Psoas muscle (tissue), 8 donors: ENCODE measurements at regions of chr5 and their contacts with region 1.

Region 1: DNA sequence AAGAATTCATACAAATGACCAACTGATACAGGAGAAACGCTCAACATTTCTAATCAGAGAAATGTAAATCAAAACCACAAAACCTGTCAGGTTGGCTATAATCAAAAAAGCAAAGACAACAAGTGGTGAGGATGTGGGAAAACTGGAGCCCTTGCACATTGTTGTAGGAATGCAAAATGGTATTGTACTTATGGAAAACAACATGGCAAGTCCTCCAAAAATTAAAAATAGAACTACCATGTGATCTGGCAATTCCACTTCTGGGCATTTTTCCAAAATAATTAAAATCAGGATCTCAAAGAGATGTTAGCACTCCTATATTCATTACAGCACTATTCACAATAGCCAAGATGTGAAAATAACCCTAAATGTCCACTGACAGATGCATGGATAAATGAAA is 76.1 kb downstream of the FNIP1 start:
- DNase-seq: no peak
- ATAC-seq: peak in 1 of 4 donors; percentile 24
- H3K4me3 ChIP-seq: no peak overlapping the region
- H3K27ac ChIP-seq: no peak overlapping the region
- H3K4me1 ChIP-seq: no peaks in the 10 kb centered on the region
- H3K27me3 ChIP-seq: no peaks in the 10 kb centered on the region
- CTCF ChIP-seq: no peak

Region 2: DNA sequence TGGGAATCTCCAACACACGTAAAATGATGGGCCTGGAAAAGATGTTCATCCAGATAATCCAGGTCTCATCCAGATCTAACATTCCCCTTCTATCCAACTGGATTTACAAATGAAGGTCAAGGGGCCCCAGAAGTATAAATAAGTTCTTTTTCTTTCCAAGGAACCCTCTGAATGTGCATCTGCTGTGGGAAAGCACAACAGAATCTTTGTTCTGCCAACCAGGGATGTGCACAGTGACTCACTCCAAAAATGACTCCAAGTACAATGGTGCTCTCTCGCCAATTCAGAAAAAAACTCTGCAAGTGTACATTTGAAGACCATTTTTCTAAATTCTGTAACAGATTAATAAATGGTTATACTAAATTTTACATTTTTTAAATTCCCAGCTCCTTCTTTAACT is 98.1 kb before region 1 on chr5:
- intact Hi-C with region 1: no loop called
- DNase-seq: no peak
- ATAC-seq: peak in 2 of 4 donors; percentile 49 to 72
- H3K4me3 ChIP-seq: no peak overlapping the region
- H3K27ac ChIP-seq: no peak overlapping the region
- H3K4me1 ChIP-seq: peaks cover 27% of the 10 kb centered on the region
- H3K27me3 ChIP-seq: no peaks in the 10 kb centered on the region
- CTCF ChIP-seq: no peak

Region 3: DNA sequence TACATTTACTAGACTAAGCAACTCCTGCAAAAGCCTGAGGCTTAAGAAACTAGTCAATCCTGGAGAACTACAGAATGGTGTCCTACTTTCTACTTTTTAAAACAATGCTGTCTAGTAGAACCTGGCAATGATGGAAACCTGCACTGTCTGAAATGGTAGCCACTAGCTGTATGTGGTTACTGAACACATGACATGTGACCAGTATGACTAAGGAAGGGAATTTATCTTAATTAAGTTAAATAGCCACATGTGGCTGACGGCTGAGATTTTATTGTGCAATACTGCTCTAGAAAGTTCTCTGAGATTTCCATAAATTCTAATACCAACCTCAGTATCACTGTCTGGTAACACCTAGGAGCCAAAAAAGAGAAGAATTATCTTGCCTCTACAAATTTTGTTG is 40.8 kb before region 1 on chr5:
- intact Hi-C with region 1: no loop called
- DNase-seq: no peak
- ATAC-seq: no peak
- H3K4me3 ChIP-seq: no peak overlapping the region
- H3K27ac ChIP-seq: no peak overlapping the region
- H3K4me1 ChIP-seq: peaks cover 9% of the 10 kb centered on the region
- H3K27me3 ChIP-seq: no peaks in the 10 kb centered on the region
- CTCF ChIP-seq: no peak

Region 4: DNA sequence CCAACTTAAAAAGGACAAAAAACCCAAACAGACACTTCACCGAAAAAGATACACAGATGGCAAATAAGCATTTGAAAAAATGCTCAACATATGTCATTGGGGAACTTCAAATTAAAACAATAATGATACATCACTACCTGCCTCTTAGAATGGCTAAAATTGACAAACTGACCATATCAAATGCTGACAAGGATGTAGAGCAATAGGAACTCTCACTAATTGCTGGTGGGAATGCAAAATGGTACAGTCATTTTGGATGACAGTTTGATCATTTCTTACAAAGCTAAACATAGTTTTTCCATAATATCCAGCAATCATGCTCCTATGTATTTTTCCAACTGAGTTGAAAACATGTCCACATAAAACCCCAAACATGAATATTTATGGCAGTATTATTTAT is 26.8 kb before region 1 on chr5:
- intact Hi-C with region 1: loop called in 1 of 2 experiments (anchors 2 kb)
- DNase-seq: no peak
- ATAC-seq: no peak
- H3K4me3 ChIP-seq: no peak overlapping the region
- H3K27ac ChIP-seq: no peak overlapping the region
- H3K4me1 ChIP-seq: no peaks in the 10 kb centered on the region
- H3K27me3 ChIP-seq: no peaks in the 10 kb centered on the region
- CTCF ChIP-seq: no peak

Region 5: GRCh38 chr5:131773805-131774204 is 53.1 kb after region 1 on chr5:
- intact Hi-C with region 1: no loop called
- DNase-seq: no peak
- ATAC-seq: peak in 1 of 4 donors; percentile 17
- H3K4me3 ChIP-seq: no peak overlapping the region
- H3K27ac ChIP-seq: peak overlapping the region; percentile 72
- H3K4me1 ChIP-seq: peaks cover 78% of the 10 kb centered on the region
- H3K27me3 ChIP-seq: no peaks in the 10 kb centered on the region
- CTCF ChIP-seq: no peak